Left ventricle myocardium inferior (tissue), 1 donor: ENCODE measurements at regions of chr6 and their contacts with region 1.

Region 1: DNA sequence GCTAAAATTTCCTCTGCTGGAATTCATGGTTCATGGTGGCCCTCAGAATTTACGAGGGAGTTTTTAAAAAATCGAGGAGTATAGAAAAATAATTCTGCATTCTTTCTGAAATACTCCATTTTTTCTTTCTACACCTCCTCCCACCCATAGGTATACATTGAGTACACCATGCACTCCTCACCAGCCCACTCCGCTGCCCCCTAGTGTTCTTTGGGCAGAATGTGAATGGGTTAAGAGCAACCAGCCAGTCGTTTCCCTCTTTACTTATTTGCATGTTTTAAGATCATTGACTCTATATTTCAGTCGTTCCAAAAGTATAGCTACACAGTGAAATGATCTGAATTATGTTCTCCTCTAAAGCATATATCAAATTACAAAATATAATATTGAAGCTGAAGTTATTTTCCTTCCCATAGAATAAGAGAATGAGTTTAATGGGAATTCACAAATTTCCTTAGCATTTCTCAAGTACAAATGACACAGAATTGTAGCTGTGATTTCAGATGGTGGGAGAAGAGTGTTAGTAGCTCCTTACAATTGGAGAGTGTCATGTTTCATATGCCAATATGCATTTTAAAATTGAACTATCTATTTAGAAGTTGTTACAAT is 977.7 kb upstream of the SLC35B3 start:
- DNase-seq: no peak
- H3K4me3 ChIP-seq: no peak overlapping the region
- H3K27ac ChIP-seq: no peak overlapping the region
- H3K4me1 ChIP-seq: no peaks in the 10 kb centered on the region
- H3K27me3 ChIP-seq: no peaks in the 10 kb centered on the region
- CTCF ChIP-seq: peak; percentile 69

Region 2: DNA sequence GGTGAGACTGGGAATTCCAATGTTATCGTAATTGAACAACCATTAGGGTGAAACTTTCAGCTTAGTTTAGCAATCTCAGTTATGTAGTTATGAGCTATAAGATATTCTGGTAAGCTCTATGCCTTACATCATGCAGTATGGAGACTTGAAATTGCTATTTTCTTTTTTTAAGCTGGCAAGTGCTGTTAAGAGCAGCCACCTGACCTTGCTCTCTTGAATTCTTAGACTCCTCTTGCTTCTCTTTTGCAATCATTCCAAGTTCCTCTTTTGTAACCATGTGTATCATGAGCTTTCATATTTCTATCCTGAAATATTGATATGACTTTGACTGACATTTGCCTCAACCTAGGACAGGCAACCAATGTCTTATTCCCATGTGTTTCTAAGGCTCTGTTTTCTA is 531.4 kb before region 1 on chr6:
- intact Hi-C with region 1: no loop called
- DNase-seq: no peak
- H3K4me3 ChIP-seq: no peak overlapping the region
- H3K27ac ChIP-seq: no peak overlapping the region
- H3K4me1 ChIP-seq: no peaks in the 10 kb centered on the region
- H3K27me3 ChIP-seq: no peaks in the 10 kb centered on the region
- CTCF ChIP-seq: no peak

Region 3: DNA sequence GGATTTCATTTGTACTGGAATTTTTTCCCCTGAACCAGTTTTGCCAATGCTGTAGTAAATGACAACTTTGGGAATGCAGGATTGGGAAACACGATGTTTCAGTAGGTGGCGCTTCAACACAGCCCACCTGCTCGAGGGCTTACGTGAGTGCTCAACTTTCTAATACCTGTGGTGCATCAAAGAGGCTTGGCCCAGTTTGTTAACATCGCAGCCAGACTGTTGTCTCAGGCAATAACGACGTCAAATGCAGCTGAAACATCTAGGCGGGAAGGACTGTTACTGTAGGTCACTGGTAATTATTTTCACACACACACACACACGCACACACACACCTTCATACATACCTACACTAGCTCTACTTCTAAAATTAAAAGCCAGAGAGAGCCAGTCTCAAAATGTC is 162.2 kb before region 1 on chr6:
- intact Hi-C with region 1: loop called (anchors 10 kb)
- DNase-seq: no peak
- H3K4me3 ChIP-seq: no peak overlapping the region
- H3K27ac ChIP-seq: no peak overlapping the region
- H3K4me1 ChIP-seq: no peaks in the 10 kb centered on the region
- H3K27me3 ChIP-seq: peaks cover 4% of the 10 kb centered on the region
- CTCF ChIP-seq: peak; percentile 62

Region 4: GRCh38 chr6:9316831-9317230 is 96.2 kb before region 1 on chr6:
- intact Hi-C with region 1: no loop called
- DNase-seq: no peak
- H3K4me3 ChIP-seq: no peak overlapping the region
- H3K27ac ChIP-seq: no peak overlapping the region
- H3K4me1 ChIP-seq: no peaks in the 10 kb centered on the region
- H3K27me3 ChIP-seq: no peaks in the 10 kb centered on the region
- CTCF ChIP-seq: no peak

Region 5: DNA sequence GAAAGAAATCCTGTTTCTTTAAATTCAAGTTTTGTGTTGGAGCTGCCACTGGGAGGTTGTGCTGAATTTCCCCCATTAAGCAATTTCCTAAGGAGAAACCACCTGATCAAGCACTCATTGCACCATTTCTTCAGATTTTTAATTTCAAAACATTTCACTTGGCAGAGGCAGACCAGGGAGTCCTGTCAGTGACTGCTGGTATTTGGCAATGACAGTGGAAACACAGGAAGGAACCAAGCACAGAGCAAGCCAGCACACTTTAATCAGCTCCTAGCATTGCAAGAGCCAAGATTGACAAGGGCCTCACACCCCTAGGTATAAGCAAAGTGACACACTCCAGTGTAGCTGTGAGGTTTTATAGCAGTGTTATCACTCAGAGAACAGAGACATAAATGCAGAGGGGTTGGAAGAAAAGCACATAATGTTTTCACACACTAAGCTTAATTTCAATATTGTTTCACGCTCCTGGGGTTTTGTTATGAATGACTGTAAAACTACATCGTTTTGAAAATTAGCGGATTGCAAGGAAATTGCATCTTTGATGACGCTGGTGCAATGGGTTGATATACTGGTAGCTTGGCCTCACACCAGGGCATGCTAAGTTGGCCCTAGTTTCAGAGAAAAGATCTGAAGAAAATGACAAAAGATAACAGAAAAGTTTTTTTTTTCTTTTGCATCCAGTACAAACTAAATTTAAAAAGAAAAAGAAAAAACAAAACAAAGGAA is 233.4 kb after region 1 on chr6:
- intact Hi-C with region 1: no loop called
- DNase-seq: no peak
- H3K4me3 ChIP-seq: no peak overlapping the region
- H3K27ac ChIP-seq: no peak overlapping the region
- H3K4me1 ChIP-seq: peaks cover 12% of the 10 kb centered on the region
- H3K27me3 ChIP-seq: no peaks in the 10 kb centered on the region
- CTCF ChIP-seq: no peak